ENCODE measurements at regions of chr3 and their contacts with region 1.

Region 1: DNA sequence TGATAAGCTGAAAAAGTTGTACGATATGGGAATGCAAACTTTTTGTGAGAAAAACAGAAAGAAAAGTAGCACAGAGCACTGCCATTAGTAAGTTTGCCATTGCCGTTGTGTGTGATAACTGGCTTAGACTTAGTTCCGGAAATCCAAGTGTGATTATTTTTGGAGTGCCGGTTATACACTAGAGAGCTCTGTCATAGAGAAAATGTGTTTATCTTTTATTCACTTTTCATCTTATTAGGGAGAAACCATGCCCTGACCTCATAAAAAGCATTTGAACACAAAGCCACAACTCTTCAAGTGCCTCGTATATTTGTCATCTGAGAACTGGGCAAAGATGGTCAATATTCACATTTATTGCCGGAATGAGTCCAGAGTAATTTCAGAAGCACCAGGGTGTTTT is 36.1 kb downstream of the CTDSPL start:
- DNase-seq: no peak
- ATAC-seq: no peak
- H3K4me3 ChIP-seq: no peak overlapping the region
- H3K27ac ChIP-seq: peak overlapping the region; percentile 36; the same call in 1 of the 3 replicates
- H3K4me1 ChIP-seq: peaks cover 0 to 35% of the 10 kb centered on the region in 2 experiments; a peak in 3 of 5 replicates
- H3K27me3 ChIP-seq: peaks cover 0 to 3% of the 10 kb centered on the region in 2 experiments; a peak in 2 of 5 replicates
- CTCF ChIP-seq: no peak
- EP300 ChIP-seq: no peak
- POLR2A ChIP-seq: no peak
- RAD21 ChIP-seq: no peak

Region 2: DNA sequence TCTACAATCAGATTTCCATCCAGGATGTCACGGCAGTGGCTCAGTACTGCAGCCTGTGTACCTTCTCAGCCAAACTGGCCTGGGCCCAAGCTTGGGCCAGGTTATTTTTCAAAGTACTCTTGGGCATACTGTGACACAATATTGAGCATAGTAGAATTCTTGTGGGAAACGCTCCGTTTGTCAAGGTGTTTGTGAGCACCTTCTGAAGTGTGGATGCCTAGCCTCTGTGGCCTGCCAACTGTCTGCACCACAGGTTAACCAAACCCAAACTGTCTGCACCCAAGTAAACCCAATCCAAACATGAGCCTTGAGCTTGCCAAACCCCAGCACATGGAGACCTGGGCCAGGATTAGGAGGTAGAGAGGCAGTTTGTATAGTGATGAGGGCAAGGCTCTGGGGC is 10.7 kb before region 1 on chr3:
- CTCF ChIA-PET with region 1: no interaction called
- POLR2A ChIA-PET with region 1: interaction called, 13 read pairs
- in situ Hi-C with region 1: no loop called
- intact Hi-C with region 1: no loop called
- DNase-seq: no peak
- ATAC-seq: no peak
- H3K4me3 ChIP-seq: no peak overlapping the region
- H3K27ac ChIP-seq: no peak overlapping the region
- H3K4me1 ChIP-seq: no peaks in the 10 kb centered on the region
- H3K27me3 ChIP-seq: peaks cover 2 to 5% of the 10 kb centered on the region in 2 experiments; a peak in 2 of 5 replicates
- CTCF ChIP-seq: no peak
- EP300 ChIP-seq: no peak
- POLR2A ChIP-seq: no peak
- RAD21 ChIP-seq: no peak

Measured in K562 (cell line).